Activated CD4-positive, alpha-beta T cell treated with anti-CD3 and anti-CD28 coated beads for 36 hours (primary cell): ENCODE measurements at regions of chr4 and their contacts with region 1.

Region 1: DNA sequence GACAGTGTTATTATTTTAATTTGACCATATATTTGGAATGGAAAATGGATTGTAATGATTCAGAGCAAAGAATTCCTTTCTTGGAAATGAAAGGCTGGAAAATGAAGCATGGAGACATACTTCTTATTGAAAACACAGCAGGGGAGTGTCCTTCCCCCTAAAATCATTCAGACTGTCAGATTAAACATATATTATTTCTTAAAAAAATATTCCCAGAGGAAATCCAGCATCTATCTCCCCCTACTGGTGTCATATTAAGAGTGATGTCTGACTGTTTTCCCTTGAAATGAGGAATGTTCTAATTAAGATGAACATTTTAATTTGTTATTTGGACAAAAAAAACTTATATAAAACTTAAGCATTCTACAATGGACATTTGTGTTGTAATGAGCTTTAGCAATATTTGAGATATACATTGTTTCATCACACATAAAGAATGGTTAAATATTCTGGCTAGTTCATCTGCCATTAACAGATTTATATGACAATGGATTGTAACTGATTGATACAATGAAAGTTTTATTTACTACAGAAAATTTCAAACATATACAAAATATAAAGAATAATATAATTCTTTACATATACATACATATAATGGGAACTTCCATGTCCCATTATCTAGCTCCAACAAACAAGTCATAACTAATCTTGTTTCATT is 264.6 kb downstream of the SPRY1 start:
- DNase-seq: no peak
- ATAC-seq: no peak
- H3K4me3 Mint-ChIP-seq: no peak overlapping the region
- H3K27ac Mint-ChIP-seq: no peak overlapping the region
- H3K4me1 Mint-ChIP-seq: peaks cover 15% of the 10 kb centered on the region
- H3K27me3 Mint-ChIP-seq: peaks cover 17% of the 10 kb centered on the region

Region 2: DNA sequence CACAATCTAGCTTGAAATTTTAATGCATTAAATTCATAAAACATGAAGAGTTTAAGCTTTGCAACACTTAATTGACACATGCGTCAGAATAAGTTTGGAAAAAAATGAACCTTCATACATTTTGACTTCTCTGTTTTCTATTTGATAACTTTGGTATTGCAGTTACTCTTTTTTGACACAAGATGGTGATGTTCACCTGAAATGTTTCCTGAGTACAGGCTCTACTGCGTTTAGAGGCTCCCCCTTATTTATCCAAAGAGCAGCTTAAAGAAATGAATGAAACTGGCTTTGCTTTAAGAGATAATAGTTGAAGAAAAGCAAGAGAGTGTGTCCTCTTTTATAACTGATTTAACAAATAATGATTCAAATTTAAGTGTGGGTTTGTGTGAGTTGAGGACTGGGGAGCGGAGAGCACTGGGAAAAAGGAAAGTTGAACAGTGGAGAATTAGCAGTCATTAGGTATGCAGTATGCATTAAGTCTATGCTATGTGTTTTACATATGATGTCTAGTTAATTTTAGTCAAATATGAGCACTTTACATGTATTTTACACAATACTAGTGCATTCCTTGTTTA is 558.2 kb before region 1 on chr4:
- CTCF ChIA-PET with region 1: interaction called, 3 read pairs
- POLR2A ChIA-PET with region 1: no interaction called
- intact Hi-C with region 1: loop called (anchors 1 to 10 kb)
- DNase-seq: no peak
- ATAC-seq: peak; percentile 68
- H3K4me3 Mint-ChIP-seq: no peak overlapping the region
- H3K27ac Mint-ChIP-seq: no peak overlapping the region
- H3K4me1 Mint-ChIP-seq: no peaks in the 10 kb centered on the region
- H3K27me3 Mint-ChIP-seq: no peaks in the 10 kb centered on the region

Region 3: DNA sequence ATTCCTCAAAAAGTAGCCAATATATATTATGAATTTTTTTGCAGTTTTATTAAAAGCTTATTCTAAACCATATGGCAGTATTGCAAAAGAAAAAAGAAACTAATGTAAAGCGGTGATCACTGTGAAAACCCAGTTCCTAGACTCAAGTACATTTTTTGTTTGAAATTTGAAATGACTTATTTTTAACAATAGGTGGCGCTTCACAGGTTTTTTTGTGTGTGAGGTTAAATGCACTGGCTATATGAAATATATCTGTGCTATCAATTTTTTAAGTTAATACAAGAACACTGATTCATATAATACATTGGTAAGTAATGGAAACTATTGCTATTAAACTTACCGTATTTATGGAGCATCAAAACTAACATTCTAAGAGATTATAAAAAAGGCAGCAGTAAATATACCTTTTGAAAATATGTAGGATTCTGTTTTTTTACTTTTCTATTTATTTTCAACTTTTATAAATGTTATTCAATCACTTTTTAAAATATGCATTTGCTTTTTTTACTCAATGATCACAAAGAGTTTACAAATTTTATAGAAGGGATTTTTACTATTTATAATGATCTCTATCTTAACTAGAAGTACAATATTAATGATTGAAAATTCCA is 270.3 kb before region 1 on chr4:
- CTCF ChIA-PET with region 1: interaction called, 6 read pairs
- POLR2A ChIA-PET with region 1: no interaction called
- intact Hi-C with region 1: loop called (anchors 2 to 5 kb)
- DNase-seq: no peak
- ATAC-seq: no peak
- H3K4me3 Mint-ChIP-seq: no peak overlapping the region
- H3K27ac Mint-ChIP-seq: no peak overlapping the region
- H3K4me1 Mint-ChIP-seq: peaks cover 8% of the 10 kb centered on the region
- H3K27me3 Mint-ChIP-seq: no peaks in the 10 kb centered on the region

Region 4: GRCh38 chr4:123564758-123565346 is 96.4 kb before region 1 on chr4:
- CTCF ChIA-PET with region 1: interaction called, 9 read pairs
- POLR2A ChIA-PET with region 1: no interaction called
- intact Hi-C with region 1: loop called in 1 of 2 experiments (anchors 1 kb)
- DNase-seq: peak; percentile 64
- ATAC-seq: peak; percentile 100
- H3K4me3 Mint-ChIP-seq: no peak overlapping the region
- H3K27ac Mint-ChIP-seq: no peak overlapping the region
- H3K4me1 Mint-ChIP-seq: peaks cover 2% of the 10 kb centered on the region
- H3K27me3 Mint-ChIP-seq: peaks cover 9% of the 10 kb centered on the region

Region 5: GRCh38 chr4:123573866-123574508 is 87.2 kb before region 1 on chr4:
- CTCF ChIA-PET with region 1: no interaction called
- POLR2A ChIA-PET with region 1: no interaction called
- intact Hi-C with region 1: loop called in 1 of 2 experiments (anchors 5 kb)
- DNase-seq: no peak
- ATAC-seq: no peak
- H3K4me3 Mint-ChIP-seq: no peak overlapping the region
- H3K27ac Mint-ChIP-seq: no peak overlapping the region
- H3K4me1 Mint-ChIP-seq: no peaks in the 10 kb centered on the region
- H3K27me3 Mint-ChIP-seq: no peaks in the 10 kb centered on the region

Region 6: DNA sequence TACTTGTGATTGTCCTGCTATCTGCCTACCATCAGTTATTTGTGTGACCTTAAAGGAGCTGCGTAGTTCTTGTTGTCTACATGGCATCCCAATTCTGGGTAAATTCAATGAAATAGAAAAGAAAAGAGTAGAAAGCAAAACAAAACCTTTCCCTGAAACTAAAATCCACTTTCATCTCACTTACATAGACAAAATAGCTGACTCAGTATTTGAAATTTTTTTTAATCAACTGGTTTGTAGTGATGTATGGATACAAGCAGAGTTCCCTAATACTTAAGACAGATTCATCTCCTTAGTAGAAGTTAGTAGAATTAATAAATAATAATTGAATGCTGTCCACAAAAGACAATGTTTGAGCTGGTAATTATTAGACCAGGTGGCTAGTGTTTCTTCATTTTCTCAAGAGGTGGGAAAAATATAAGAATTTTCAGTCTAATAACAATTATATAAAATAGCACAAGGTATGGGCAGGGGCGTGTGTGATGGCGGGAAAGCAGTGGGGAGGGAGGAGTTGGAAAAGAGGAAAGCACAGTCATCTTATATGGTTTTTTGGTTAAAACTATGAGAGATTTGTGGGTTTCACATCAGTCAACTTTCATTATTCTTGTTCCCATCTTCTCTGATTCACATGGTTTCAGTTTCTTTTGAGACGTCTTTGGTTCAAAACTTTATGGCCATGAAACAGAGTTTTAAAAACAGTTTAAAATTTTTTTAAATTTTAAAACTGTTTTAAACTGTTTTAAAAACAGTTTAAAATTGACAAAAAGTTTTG is 10.6 kb after region 1 on chr4:
- CTCF ChIA-PET with region 1: interaction called, 11 read pairs
- POLR2A ChIA-PET with region 1: no interaction called
- intact Hi-C with region 1: no loop called
- DNase-seq: peak; percentile 60
- ATAC-seq: peak; percentile 79
- H3K4me3 Mint-ChIP-seq: no peak overlapping the region
- H3K27ac Mint-ChIP-seq: no peak overlapping the region
- H3K4me1 Mint-ChIP-seq: peaks cover 30% of the 10 kb centered on the region
- H3K27me3 Mint-ChIP-seq: peaks cover 51% of the 10 kb centered on the region

Region 7: GRCh38 chr4:124641715-124642381 is 980.6 kb after region 1 on chr4:
- CTCF ChIA-PET with region 1: no interaction called
- POLR2A ChIA-PET with region 1: no interaction called
- intact Hi-C with region 1: no loop called
- DNase-seq: no peak
- ATAC-seq: peak; percentile 36
- H3K4me3 Mint-ChIP-seq: no peak overlapping the region
- H3K27ac Mint-ChIP-seq: no peak overlapping the region
- H3K4me1 Mint-ChIP-seq: peaks cover 3% of the 10 kb centered on the region
- H3K27me3 Mint-ChIP-seq: no peaks in the 10 kb centered on the region

Region 8: DNA sequence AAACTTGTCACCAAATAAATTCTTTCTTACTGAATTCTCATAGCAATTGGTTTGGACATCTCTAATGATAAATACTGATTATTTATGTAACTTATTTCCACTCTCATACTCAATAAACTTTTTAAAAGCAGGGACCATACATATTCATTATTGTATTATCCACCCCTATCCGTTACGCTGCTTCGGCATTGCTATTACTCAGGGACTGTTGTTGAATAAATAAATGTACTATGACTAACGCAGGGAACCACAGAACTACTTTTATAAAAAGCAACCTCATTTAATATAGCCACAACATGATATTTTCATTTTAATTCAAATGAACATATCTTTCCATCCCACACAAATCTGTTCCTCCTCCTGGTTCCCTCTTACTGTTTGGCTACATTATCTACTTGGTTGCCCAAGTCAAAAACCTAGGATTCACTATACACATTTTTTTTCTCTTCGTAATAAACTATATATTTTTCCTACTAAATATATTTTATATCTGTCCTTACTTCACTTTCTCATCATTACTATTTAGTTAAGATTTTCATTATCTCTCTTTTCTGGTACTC is 1066.2 kb after region 1 on chr4:
- CTCF ChIA-PET with region 1: no interaction called
- POLR2A ChIA-PET with region 1: no interaction called
- intact Hi-C with region 1: no loop called
- DNase-seq: no peak
- ATAC-seq: no peak
- H3K4me3 Mint-ChIP-seq: no peak overlapping the region
- H3K27ac Mint-ChIP-seq: no peak overlapping the region
- H3K4me1 Mint-ChIP-seq: no peaks in the 10 kb centered on the region
- H3K27me3 Mint-ChIP-seq: no peaks in the 10 kb centered on the region